CD4-positive, alpha-beta T cell (primary cell): ENCODE measurements at regions of chr16 and their contacts with region 1.

Region 1: DNA sequence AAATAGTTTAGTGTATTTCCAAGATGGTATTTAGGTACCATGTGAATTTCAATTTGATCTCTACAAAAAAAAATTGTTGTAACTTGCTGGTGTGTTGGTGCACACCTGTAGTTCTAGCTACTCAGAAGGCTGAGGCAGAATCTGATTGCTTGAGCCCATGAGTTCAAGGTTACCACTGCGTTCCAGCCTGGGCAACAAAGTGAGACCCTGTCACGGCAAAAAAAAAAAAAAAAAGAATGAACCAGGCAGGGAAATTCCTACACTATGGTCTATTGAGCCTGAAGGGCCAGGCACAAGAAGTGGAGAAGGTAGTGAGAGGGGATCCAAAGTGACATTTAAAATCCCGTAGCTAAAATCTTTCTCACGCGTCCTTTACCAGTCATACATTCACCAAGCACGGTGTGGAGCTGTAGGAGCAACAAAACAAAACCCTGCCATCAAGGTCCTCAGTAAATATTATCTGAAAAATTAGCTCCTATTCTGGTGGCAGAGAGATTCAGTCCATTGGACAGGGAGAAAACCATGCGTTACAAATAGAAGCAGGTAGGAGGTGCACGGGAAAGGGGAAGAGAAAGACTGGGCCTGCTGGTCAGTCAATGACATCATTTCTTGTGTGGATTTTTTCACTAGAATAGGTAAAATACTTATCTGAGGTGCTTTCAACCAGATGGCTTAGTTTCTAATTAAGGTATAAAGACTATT is 27.3 kb downstream of the TXNDC11 start:
- DNase-seq: no peak
- ATAC-seq: no peak
- H3K4me3 ChIP-seq: no peak overlapping the region
- H3K4me3 Mint-ChIP-seq: no peak overlapping the region
- H3K27ac ChIP-seq: no peak overlapping the region
- H3K27ac Mint-ChIP-seq: peak overlapping the region; percentile 36
- H3K4me1 ChIP-seq: no peaks in the 10 kb centered on the region
- H3K4me1 Mint-ChIP-seq: peaks cover 20% of the 10 kb centered on the region
- H3K27me3 ChIP-seq: no peaks in the 10 kb centered on the region
- H3K27me3 Mint-ChIP-seq: no peaks in the 10 kb centered on the region
- CTCF ChIP-seq: no peak

Region 2: GRCh38 chr16:9755081-9755480 is 1960.3 kb before region 1 on chr16:
- CTCF ChIA-PET with region 1: no interaction called
- POLR2A ChIA-PET with region 1: no interaction called
- intact Hi-C with region 1: no loop called
- DNase-seq: no peak
- ATAC-seq: no peak
- H3K4me3 ChIP-seq: no peak overlapping the region
- H3K4me3 Mint-ChIP-seq: no peak overlapping the region
- H3K27ac ChIP-seq: no peak overlapping the region
- H3K27ac Mint-ChIP-seq: no peak overlapping the region
- H3K4me1 ChIP-seq: no peaks in the 10 kb centered on the region
- H3K4me1 Mint-ChIP-seq: no peaks in the 10 kb centered on the region
- H3K27me3 ChIP-seq: no peaks in the 10 kb centered on the region
- H3K27me3 Mint-ChIP-seq: peaks cover 3% of the 10 kb centered on the region
- CTCF ChIP-seq: no peak

Region 3: DNA sequence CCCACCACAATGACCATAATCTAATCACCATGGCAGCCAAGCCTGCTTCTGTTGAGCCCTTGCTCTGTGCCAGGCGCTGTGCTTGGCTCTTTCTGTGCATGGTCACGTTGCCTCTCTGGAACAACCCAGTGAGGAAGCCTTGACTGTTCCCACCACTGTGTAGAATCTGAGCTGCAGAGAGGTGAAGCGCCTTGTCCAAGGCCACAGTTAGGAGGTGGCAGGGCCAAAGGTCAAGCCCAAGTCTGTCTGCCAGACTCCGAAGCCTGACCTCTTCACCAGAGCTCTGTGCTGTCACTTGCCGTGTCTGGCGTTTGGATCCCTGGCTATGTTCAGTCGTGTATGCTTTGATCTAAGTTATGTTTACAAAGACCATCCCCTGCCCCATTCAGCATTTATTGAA is 760.5 kb before region 1 on chr16:
- CTCF ChIA-PET with region 1: no interaction called
- POLR2A ChIA-PET with region 1: no interaction called
- intact Hi-C with region 1: loop called (anchors 2 to 5 kb)
- DNase-seq: no peak
- ATAC-seq: no peak
- H3K4me3 ChIP-seq: no peak overlapping the region
- H3K4me3 Mint-ChIP-seq: no peak overlapping the region
- H3K27ac ChIP-seq: no peak overlapping the region
- H3K27ac Mint-ChIP-seq: no peak overlapping the region
- H3K4me1 ChIP-seq: peaks cover 17% of the 10 kb centered on the region
- H3K4me1 Mint-ChIP-seq: peaks cover 56% of the 10 kb centered on the region
- H3K27me3 ChIP-seq: no peaks in the 10 kb centered on the region
- H3K27me3 Mint-ChIP-seq: no peaks in the 10 kb centered on the region
- CTCF ChIP-seq: no peak

Region 4: DNA sequence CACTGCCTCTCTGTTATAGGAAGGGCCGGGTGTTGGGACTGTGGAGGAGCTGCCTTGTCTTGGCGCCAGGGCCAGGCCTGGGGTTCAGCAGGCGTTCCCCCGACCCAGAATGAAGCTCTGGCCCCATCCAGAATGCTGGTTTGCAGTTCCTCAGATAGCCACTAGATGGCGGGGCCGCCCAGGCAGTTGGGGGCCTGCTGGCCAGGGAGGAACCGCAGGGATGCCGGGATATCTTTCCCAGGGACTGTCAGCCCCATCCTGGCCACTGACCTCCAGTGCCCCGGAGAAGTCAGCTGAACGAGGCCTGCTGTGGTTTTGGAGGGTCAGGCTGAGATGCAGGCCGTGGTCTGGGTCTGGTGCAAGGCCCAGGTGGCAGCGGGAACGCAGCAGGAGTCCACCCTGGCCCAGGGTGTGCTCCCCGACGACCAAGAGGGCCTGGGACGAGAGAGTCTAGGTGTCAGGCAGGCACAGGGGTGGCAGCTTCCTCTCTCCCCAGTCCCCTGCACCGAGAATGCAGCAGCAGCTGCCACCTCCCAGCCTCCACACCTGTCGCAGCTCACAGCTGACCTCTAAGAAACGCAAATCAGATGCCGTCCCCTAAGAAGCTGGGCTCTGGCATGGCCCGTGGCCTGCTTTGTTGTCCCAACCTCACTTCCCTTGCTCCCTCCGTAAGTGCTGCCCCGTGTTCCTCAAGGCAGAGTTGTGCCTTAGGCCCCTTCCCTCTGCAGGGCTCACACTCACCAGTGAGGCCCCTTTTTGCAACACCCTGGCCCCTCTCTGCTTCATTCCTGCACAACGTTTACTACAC is 319.0 kb before region 1 on chr16:
- CTCF ChIA-PET with region 1: interaction called, 10 read pairs
- POLR2A ChIA-PET with region 1: no interaction called
- intact Hi-C with region 1: loop called (anchors 1 to 2 kb)
- DNase-seq: peak; percentile 38 to 78 (median 59)
- ATAC-seq: peak; percentile 74
- H3K4me3 ChIP-seq: no peak overlapping the region
- H3K4me3 Mint-ChIP-seq: no peak overlapping the region
- H3K27ac ChIP-seq: no peak overlapping the region
- H3K27ac Mint-ChIP-seq: no peak overlapping the region
- H3K4me1 ChIP-seq: peaks cover 6% of the 10 kb centered on the region
- H3K4me1 Mint-ChIP-seq: no peaks in the 10 kb centered on the region
- H3K27me3 ChIP-seq: no peaks in the 10 kb centered on the region
- H3K27me3 Mint-ChIP-seq: no peaks in the 10 kb centered on the region
- CTCF ChIP-seq: peak; percentile 99

Region 5: DNA sequence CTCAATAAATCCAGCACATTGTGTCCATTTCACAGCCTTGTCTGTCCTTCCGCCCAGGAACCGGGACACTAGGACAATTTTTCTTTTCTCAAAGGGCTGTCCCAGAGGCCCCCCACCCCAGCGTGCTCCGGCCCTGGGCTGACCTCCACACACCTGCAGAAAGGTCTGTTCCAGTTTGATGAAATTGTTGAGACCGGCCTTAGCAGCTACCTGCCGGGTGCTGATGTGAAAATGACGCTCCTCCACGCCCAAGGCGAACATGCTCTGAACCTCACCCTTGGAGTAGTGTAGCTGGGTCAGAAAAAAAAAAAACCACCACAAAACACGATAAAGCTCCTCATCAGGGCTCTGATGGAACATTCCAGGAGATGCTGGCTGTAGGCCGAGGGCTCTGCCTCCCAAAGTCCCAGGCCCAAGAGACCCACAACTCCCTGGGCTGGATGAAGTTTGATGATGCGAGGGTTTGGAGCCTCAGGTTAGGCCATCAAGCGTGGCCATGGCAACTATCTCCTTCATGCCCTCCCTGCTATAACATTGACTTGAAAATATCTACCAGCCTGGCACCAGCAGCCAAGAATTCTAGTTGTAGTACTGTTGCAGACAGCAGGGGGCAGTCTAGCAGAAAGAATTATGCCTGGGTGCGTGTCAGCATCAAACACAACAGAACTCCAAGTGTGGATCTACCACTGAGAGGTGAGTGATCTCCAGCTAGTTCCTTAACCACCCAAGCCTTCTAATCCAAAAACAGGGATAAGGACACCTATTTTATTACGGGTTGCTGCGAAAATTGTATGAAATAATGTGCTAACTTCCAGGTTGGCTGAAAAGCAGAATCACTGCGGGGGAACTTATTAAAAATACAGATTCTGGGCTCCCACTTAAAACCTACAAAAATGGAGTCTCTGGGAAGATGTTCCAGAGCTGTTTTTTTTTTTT is 308.1 kb before region 1 on chr16:
- CTCF ChIA-PET with region 1: interaction called, 4 read pairs
- POLR2A ChIA-PET with region 1: interaction called, 3 read pairs
- intact Hi-C with region 1: loop called (anchors 1 kb)
- DNase-seq: peak; percentile 40 to 81 (median 54)
- ATAC-seq: peak; percentile 78
- H3K4me3 ChIP-seq: no peak overlapping the region
- H3K4me3 Mint-ChIP-seq: no peak overlapping the region
- H3K27ac ChIP-seq: no peak overlapping the region
- H3K27ac Mint-ChIP-seq: no peak overlapping the region
- H3K4me1 ChIP-seq: no peaks in the 10 kb centered on the region
- H3K4me1 Mint-ChIP-seq: no peaks in the 10 kb centered on the region
- H3K27me3 ChIP-seq: no peaks in the 10 kb centered on the region
- H3K27me3 Mint-ChIP-seq: no peaks in the 10 kb centered on the region
- CTCF ChIP-seq: peak; percentile 69

Region 6: DNA sequence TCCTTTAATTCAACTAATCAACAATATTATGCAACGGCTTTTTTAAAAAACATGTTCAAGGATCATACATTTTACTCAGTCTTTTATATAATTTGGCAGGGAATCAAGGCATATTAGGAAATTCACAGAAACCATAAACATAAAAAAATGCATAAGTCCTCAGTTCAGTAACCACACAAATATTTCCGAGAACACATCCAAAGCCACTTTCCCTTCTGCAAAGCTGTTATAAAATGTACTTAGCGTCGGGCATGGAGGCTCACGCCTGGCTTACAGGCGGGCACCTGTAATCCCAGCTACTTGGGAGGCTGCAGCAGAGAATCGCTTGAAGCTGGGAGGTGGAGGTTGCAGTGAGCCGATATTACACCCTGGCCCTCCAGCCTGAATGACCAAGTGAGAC is 91.3 kb after region 1 on chr16:
- CTCF ChIA-PET with region 1: no interaction called
- POLR2A ChIA-PET with region 1: no interaction called
- intact Hi-C with region 1: loop called in 1 of 2 experiments (anchors 5 kb)
- DNase-seq: no peak
- ATAC-seq: no peak
- H3K4me3 ChIP-seq: no peak overlapping the region
- H3K4me3 Mint-ChIP-seq: no peak overlapping the region
- H3K27ac ChIP-seq: no peak overlapping the region
- H3K27ac Mint-ChIP-seq: no peak overlapping the region
- H3K4me1 ChIP-seq: peaks cover 8% of the 10 kb centered on the region
- H3K4me1 Mint-ChIP-seq: peaks cover 11% of the 10 kb centered on the region
- H3K27me3 ChIP-seq: no peaks in the 10 kb centered on the region
- H3K27me3 Mint-ChIP-seq: no peaks in the 10 kb centered on the region
- CTCF ChIP-seq: no peak